ENCODE measurements at regions of chr16 and their contacts with region 1.

Region 1: GRCh38 chr16:71961066-71962039 is 38.8 kb downstream of the PKD1L3 start:
- DNase-seq: peak; percentile 79
- H3K4me3 ChIP-seq: no peak overlapping the region
- H3K27ac ChIP-seq: no peak overlapping the region
- H3K4me1 ChIP-seq: no peaks in the 10 kb centered on the region
- H3K27me3 ChIP-seq: no peaks in the 10 kb centered on the region
- CTCF ChIP-seq: peak; percentile 84 to 87

Region 2: GRCh38 chr16:71610936-71611871 is 350.1 kb before region 1 on chr16:
- CTCF ChIA-PET with region 1: no interaction called
- dilution Hi-C with region 1: no loop called
- in situ Hi-C with region 1: no loop called
- intact Hi-C with region 1: loop called (anchors 1 kb)
- DNase-seq: peak; percentile 37
- H3K4me3 ChIP-seq: peak overlapping the region in 1 of 3 experiments; percentile 11
- H3K27ac ChIP-seq: no peak overlapping the region
- H3K4me1 ChIP-seq: no peaks in the 10 kb centered on the region
- H3K27me3 ChIP-seq: no peaks in the 10 kb centered on the region
- CTCF ChIP-seq: peak; percentile 78 to 91

Region 3: DNA sequence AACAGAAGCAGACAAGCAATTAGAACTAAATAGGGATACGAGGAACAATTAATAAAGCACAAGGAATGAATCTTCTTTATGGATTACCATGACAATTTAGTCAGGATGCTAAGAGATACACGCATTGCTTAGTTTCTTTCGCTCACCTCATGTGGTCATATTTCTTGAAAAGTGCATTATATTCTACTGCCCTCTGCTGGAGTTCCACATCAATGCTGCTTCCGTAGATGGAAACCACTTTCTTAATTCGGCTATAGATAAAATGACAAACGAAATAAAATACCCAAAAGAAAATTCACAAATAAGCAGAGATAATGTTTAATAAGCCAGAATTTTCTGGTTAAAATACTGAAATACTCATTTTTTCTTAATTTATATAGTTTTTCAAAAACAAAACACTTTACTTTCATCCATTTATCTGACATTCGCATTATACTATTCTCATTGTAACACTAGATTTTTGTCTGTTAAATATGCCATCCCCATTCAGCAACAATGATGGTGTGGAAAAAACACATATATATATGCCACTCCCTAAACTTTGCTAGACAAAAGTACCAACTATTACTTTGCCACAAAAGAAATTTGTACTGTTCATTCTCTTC is 214.8 kb before region 1 on chr16:
- CTCF ChIA-PET with region 1: interaction called, 3 read pairs
- dilution Hi-C with region 1: no loop called
- in situ Hi-C with region 1: no loop called
- intact Hi-C with region 1: loop called (anchors 2 kb)
- DNase-seq: peak; percentile 29
- H3K4me3 ChIP-seq: no peak overlapping the region
- H3K27ac ChIP-seq: no peak overlapping the region
- H3K4me1 ChIP-seq: no peaks in the 10 kb centered on the region
- H3K27me3 ChIP-seq: no peaks in the 10 kb centered on the region
- CTCF ChIP-seq: peak; percentile 65 to 80

Region 4: DNA sequence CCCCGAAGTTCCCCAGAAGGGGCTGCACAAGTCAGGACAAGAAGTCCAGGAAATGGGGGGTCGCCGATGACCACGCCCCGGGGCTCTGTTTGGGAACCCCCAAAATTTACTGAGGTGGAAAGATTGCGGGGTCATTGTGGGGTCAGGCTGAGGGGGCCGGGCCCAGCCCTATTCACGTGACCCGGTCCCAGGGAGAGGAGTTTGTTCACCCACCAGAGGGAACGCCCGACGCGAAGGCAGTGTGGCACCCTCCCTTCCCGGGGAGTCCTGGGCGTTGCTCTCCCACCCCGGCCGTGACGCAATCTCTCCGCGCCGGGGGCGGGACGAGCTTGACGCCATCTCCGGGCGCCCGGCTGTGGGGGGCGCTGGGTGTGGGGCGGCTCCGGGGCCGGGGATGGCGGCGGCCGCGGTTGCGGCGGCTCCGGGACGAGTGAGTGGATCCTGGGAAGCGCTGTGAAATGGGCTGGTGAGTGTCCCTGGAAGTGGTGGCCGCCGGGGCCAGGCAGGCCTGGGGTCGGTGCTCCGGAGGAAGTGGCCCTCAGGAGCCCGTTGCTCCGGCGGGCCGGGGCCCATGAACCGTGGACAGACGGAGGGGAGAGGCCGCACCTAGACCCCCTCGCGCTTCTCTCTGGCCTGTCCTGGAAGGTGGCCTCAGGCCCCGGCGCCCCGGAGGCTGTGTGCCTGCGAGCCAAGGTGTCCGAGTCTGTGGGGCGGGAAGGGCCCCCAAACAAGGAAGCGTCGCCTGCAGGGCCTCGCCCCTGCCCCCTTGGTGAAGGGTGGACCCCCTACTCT is 115.5 kb before region 1 on chr16 and contains the start of gene ATXN1L:
- CTCF ChIA-PET with region 1: no interaction called
- dilution Hi-C with region 1: no loop called
- in situ Hi-C with region 1: no loop called
- intact Hi-C with region 1: loop called (anchors 1 kb)
- DNase-seq: peak; percentile 91
- H3K4me3 ChIP-seq: peak within 1 kb of the TSS; percentile 85 to 97 (median 95)
- H3K27ac ChIP-seq: peak within 1 kb of the TSS; percentile 90
- H3K4me1 ChIP-seq: peaks cover 11% of the 10 kb centered on the region
- H3K27me3 ChIP-seq: no peaks in the 10 kb centered on the region
- CTCF ChIP-seq: no peak
- total RNA-seq, gene ATXN1L: 15.5 to 16.7 TPM

Region 5: GRCh38 chr16:71929048-71929447 is 32.3 kb before region 1 on chr16:
- CTCF ChIA-PET with region 1: no interaction called
- dilution Hi-C with region 1: no loop called
- in situ Hi-C with region 1: no loop called
- intact Hi-C with region 1: loop called (anchors 2 kb)
- DNase-seq: no peak
- H3K4me3 ChIP-seq: no peak overlapping the region
- H3K27ac ChIP-seq: no peak overlapping the region
- H3K4me1 ChIP-seq: peaks cover 27% of the 10 kb centered on the region
- H3K27me3 ChIP-seq: no peaks in the 10 kb centered on the region
- CTCF ChIP-seq: no peak

Region 6: DNA sequence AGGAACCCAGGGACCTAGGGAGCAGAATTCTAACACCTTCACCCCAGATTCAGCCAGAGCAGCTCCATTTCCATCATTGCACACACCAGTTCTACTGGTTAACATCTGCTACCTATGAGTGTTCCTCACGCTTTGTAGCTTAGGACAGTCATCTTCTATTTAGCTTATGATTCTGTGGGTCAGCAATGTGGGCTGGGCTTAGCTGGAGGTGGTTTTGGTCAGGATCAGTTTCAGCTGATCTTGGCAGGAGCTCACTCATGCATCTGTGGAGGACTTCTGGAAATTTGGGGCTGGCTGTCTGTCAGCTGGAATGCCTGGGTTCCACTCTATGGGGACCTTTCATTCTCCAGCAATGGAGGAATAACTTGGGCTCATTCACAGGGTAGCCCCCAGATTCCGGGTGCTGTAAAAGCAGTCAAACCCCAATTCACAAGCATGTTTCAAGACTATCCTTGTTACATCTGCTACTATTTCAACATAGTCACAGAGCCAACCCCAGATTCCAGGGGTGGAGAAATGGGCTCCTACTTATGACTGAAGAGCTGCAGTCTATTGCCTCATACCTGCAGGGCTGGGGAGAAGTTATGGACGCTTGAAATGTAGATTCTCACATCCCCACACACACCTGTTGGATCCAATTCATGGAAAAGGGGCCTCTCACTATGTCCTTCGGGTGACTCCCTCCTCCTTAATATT is 89.6 kb after region 1 on chr16:
- CTCF ChIA-PET with region 1: no interaction called
- dilution Hi-C with region 1: no loop called
- in situ Hi-C with region 1: no loop called
- intact Hi-C with region 1: no loop called
- DNase-seq: peak; percentile 43
- H3K4me3 ChIP-seq: no peak overlapping the region
- H3K27ac ChIP-seq: no peak overlapping the region
- H3K4me1 ChIP-seq: no peaks in the 10 kb centered on the region
- H3K27me3 ChIP-seq: no peaks in the 10 kb centered on the region
- CTCF ChIP-seq: no peak